CD8-positive, alpha-beta T cell (primary cell): ENCODE measurements at regions of chr6 and their contacts with region 1.

Region 1: DNA sequence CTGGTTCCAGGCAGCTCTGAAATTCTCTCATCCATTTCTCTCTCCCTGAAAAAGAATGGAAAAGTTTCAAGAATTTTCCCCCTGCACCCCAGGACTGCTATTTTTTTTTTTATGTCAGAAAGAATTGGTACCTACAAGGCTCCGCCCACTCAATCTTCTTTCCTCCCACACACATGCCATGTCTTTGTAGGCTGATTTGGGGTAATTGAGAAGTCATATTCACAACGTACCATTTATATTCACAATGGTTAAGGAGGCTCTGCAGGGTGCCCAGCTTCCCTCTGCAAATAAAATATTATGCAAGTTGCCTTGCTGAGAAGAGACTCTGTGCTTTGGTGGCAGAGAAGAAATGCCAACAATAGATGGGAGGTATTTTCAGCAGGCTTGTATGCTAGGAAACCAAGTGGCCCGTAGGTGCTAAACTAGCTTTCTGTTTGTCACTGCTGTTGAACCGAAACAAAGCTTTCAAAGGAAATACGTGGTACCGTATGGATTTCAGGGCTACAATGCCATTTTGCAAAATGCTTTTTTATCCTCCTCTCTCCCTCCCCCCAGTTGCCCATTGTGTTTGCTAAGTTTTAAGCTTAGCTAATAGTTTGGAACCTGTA is 150.0 kb downstream of the PHACTR1 start:
- DNase-seq: no peak
- ATAC-seq: no peak
- H3K4me3 ChIP-seq: no peak overlapping the region
- H3K4me3 Mint-ChIP-seq: no peak overlapping the region
- H3K27ac ChIP-seq: no peak overlapping the region
- H3K27ac Mint-ChIP-seq: no peak overlapping the region
- H3K4me1 ChIP-seq: no peaks in the 10 kb centered on the region
- H3K4me1 Mint-ChIP-seq: no peaks in the 10 kb centered on the region
- H3K27me3 ChIP-seq: no peaks in the 10 kb centered on the region
- H3K27me3 Mint-ChIP-seq: peaks cover 2% of the 10 kb centered on the region
- CTCF ChIP-seq: no peak

Region 2: DNA sequence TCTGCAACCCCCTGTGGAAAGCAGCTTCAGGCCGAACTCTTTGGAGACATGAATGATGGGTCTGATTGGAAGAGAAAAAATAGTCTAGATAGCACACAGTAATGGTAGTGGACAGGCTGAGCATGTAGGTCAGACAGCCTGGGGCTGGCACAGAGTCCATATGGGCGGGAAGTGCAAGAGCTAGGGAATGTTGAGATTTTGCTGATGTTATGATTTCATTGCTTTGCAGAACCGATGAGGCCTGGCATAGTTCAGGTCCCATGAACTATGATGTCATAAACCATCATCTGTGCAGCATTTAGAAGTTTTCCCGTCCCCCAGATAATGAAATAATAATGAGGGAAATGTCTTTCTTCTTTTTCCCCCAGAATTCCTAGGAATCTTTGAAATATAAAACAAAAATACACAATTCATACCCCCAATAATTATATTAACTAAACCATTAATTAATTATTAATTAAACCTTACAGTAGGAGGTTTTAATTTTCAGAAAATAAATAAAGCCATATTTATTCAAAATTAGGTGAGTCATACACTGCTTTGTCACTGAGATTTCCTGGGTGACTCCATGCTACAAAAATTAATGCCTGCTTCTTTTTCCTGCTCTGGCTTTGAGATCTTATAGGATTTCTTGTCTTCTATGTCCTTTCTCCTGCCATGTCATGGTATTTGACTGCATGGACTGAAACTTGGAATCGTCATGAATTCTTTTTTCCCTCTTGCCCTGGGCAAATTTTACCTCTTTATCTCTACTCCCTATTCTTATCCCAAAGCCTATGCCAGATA is 16.9 kb before region 1 on chr6:
- CTCF ChIA-PET with region 1: no interaction called
- POLR2A ChIA-PET with region 1: no interaction called
- intact Hi-C with region 1: loop called in 1 of 2 experiments (anchors 1 kb)
- DNase-seq: no peak
- ATAC-seq: no peak
- H3K4me3 ChIP-seq: no peak overlapping the region
- H3K4me3 Mint-ChIP-seq: no peak overlapping the region
- H3K27ac ChIP-seq: no peak overlapping the region
- H3K27ac Mint-ChIP-seq: no peak overlapping the region
- H3K4me1 ChIP-seq: no peaks in the 10 kb centered on the region
- H3K4me1 Mint-ChIP-seq: no peaks in the 10 kb centered on the region
- H3K27me3 ChIP-seq: no peaks in the 10 kb centered on the region
- H3K27me3 Mint-ChIP-seq: peaks cover 11% of the 10 kb centered on the region
- CTCF ChIP-seq: no peak

Region 3: GRCh38 chr6:12935637-12936036 is 69.1 kb after region 1 on chr6:
- CTCF ChIA-PET with region 1: no interaction called
- POLR2A ChIA-PET with region 1: no interaction called
- intact Hi-C with region 1: no loop called
- DNase-seq: no peak
- ATAC-seq: no peak
- H3K4me3 ChIP-seq: no peak overlapping the region
- H3K4me3 Mint-ChIP-seq: no peak overlapping the region
- H3K27ac ChIP-seq: no peak overlapping the region
- H3K27ac Mint-ChIP-seq: no peak overlapping the region
- H3K4me1 ChIP-seq: no peaks in the 10 kb centered on the region
- H3K4me1 Mint-ChIP-seq: no peaks in the 10 kb centered on the region
- H3K27me3 ChIP-seq: no peaks in the 10 kb centered on the region
- H3K27me3 Mint-ChIP-seq: no peaks in the 10 kb centered on the region
- CTCF ChIP-seq: no peak

Region 4: DNA sequence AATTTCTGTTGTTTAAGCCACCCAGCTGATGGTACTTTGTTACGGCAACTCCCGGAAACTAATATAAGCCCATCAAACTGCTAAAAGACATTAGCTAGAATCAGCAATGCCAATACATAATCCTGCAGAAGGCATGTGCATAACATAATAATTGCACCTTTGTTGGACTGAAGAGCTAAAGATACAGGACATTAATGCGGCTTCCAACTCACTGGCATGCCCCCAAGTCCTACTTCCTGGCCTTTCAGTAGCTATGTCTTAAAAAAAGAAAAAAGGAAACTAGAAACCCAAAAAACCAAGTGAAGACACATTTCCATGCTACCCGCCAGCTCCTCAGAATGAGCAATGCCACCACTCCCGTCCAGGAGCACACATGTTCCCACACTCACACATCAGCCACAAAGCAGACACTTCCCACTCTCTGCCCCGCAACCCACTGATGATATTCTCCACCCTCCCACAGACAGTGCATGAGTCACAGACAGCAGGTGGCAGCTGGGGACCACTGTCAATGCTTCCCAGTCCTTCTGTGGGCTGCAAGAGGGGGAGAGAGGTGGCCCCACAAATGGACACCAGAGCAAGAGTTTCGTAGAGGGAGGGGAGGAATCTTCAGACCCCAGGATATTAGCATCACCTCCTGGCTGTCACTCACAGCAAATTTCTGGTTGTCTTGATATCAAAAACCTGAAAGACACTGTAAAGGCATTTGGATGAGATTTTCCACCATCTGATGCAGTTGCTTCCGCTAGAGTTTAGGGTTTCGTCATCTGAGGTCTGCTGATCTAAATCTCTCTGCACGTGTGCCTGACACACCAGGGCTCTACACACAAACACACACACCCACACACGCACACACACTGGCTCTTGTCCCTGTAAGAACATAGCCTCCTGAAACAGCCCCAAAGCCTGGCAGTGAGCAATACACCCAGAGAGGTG is 588.0 kb after region 1 on chr6:
- CTCF ChIA-PET with region 1: no interaction called
- POLR2A ChIA-PET with region 1: no interaction called
- intact Hi-C with region 1: no loop called
- DNase-seq: peak; percentile 31 to 92 (median 70)
- ATAC-seq: peak; percentile 80
- H3K4me3 ChIP-seq: peak overlapping the region; percentile 10 to 26
- H3K4me3 Mint-ChIP-seq: peak overlapping the region; percentile 62
- H3K27ac ChIP-seq: peak overlapping the region; percentile 18 to 77
- H3K27ac Mint-ChIP-seq: peak overlapping the region; percentile 90
- H3K4me1 ChIP-seq: peaks cover 31% of the 10 kb centered on the region
- H3K4me1 Mint-ChIP-seq: peaks cover 36% of the 10 kb centered on the region
- H3K27me3 ChIP-seq: no peaks in the 10 kb centered on the region
- H3K27me3 Mint-ChIP-seq: no peaks in the 10 kb centered on the region
- CTCF ChIP-seq: peak; percentile 25